ENCODE measurements at regions of chr1 and their contacts with region 1.

Region 1: GRCh38 chr1:12184008-12184681 is 17.4 kb downstream of the TNFRSF1B start:
- DNase-seq: peak; percentile 50
- H3K4me3 ChIP-seq: no peak overlapping the region
- H3K27ac ChIP-seq: no peak overlapping the region
- H3K4me1 ChIP-seq: peaks cover 10% of the 10 kb centered on the region
- H3K27me3 ChIP-seq: no peaks in the 10 kb centered on the region
- CTCF ChIP-seq: no peak

Region 2: GRCh38 chr1:12143631-12144155 is 40.5 kb before region 1 on chr1:
- CTCF ChIA-PET with region 1: no interaction called
- POLR2A ChIA-PET with region 1: interaction called, 4 read pairs
- intact Hi-C with region 1: loop called (anchors 1 kb)
- DNase-seq: peak; percentile 72 to 91
- H3K4me3 ChIP-seq: no peak overlapping the region
- H3K27ac ChIP-seq: peak overlapping the region; percentile 76
- H3K4me1 ChIP-seq: peaks cover 37% of the 10 kb centered on the region
- H3K27me3 ChIP-seq: no peaks in the 10 kb centered on the region
- CTCF ChIP-seq: no peak

Measured in PC-9 (cell line).